Astrocyte of the cerebellum (primary cell): ENCODE measurements at regions of chr1 and their contacts with region 1.

Region 1: DNA sequence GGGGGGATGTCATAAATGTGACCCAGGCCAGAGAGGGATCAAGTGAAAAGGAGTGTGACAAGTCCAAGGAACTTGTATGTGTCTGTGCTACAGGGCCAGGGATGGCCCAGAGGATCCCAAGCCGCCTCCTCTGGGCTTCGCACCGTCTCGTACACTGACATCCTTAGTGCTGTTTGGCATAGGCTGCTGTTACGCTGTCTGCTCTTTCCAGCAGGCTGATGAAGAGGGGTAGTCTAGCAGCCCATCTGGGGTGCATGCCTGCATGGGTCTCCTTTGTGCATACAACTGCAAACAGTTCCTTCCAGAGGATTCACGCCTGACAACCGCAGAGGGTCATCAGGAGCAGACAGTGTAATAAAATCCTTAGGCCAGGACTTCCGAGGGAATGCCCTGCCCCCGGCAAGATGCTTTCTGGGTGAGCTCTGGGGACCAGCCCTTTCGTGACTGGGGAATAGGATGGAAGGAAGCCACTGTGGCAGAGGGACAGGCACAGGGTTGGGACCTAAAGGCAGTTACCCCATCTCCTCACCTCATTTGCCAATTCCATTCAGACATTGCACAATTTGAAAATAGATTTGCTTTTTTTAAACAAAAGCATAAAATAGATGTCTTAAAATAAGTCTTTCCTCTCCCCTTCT is 6.3 kb upstream of the GOLT1A start:
- DNase-seq: no peak
- H3K4me3 ChIP-seq: no peak overlapping the region
- CTCF ChIP-seq: no peak

Region 2: DNA sequence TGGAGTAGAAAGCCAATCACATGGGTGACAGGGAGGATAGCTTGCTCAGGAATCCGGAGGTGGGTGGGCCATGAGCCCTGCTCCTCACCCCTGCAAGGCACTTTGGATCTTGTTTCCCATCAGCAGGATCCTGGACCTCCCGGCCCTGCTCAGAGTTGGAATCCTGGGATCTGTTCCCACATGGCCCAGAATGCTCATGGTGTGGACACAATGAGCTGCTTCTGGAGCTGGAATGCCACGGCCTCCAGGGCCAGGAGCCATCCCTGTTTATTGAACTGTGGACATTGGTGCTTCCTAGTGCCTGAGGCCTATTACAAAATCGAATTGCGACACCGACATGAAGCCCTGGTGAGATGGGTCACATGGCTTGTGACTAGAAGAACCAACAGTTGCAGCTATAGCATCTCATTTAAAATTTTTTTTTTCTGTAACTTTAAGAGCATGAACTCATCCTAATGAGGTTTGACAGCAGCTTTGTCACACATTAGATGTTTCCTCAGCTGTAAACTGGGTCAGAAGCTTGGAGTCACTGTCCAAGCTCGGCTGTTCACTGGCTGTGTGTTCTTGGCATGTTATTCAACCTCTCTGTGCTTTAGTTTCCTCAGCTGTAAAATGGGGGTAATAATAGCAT is 34.1 kb after region 1 on chr1:
- in situ Hi-C with region 1: loop called (anchors 5 kb)
- DNase-seq: no peak
- H3K4me3 ChIP-seq: no peak overlapping the region
- CTCF ChIP-seq: no peak